Body of pancreas (tissue), 4 donors: ENCODE measurements at regions of chr22 and their contacts with region 1.

Region 1: GRCh38 chr22:50507991-50508884 is at the start of gene NCAPH2:
- DNase-seq: peak; percentile 96 to 98 (median 96)
- ATAC-seq: peak; percentile 88
- H3K4me3 ChIP-seq: peak within 1 kb of the TSS; percentile 90 to 98
- H3K27ac ChIP-seq: peak within 1 kb of the TSS; percentile 90 to 95 (median 92)
- H3K4me1 ChIP-seq: peaks cover 38% of the 10 kb centered on the region
- H3K27me3 ChIP-seq: no peaks in the 10 kb centered on the region
- CTCF ChIP-seq: peak in 2 of 7 experiments; percentile 11 to 31
- POLR2A ChIP-seq: peak; percentile 73 to 87 (median 82)
- total RNA-seq, gene NCAPH2: 30.6 to 35.9 TPM

Region 2: DNA sequence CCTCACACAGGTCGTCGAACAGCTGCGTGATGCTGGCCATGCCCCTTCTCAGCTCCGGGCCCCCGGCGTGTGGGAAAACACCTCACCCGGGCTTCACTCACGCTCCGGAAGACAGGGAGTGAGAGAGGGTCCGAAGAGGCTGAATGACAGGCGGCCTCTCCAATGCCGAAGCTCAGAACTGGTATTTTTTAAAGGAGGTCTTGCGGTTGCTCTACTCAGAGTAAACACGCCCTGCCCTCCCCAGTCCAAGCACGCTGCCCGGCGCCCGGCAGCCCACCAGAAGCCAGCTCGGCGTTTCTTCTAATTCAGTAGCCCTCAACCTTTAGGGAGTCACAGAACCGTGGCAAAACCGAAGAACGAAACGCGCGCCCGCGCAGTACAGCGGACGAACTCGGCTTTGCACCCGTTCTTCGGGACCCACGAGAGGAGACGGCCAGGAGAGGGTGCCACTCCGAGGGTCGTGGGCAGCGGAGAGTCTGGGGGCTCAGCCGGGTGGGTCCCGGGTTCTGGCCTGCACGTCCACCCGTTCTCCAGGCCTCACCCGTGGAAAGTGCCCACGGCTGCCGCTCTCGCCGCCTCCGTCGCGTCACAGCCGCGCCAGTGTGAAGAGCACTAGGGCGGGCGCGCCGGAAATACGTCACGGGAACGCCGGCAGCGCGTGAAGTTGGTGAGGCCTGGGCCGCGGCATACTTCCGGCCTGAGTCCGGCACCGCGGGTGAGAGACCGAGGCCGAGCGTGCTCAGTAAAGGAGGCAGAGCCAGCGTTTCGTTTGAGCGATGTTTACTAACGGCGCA is 263.6 kb before region 1 on chr22 and contains the start of gene TUBGCP6:
- intact Hi-C with region 1: loop called (anchors 10 kb)
- DNase-seq: peak; percentile 93 to 97 (median 95)
- ATAC-seq: peak; percentile 93
- H3K4me3 ChIP-seq: peak within 1 kb of the TSS; percentile 39 to 93
- H3K27ac ChIP-seq: peak within 1 kb of the TSS; percentile 75 to 97 (median 94)
- H3K4me1 ChIP-seq: peaks cover 43% of the 10 kb centered on the region
- H3K27me3 ChIP-seq: no peaks in the 10 kb centered on the region
- CTCF ChIP-seq: peak in 5 of 7 experiments; percentile 33 to 64 (median 44)
- POLR2A ChIP-seq: peak; percentile 77 to 90 (median 87)
- total RNA-seq, gene TUBGCP6: 61.2 to 121 TPM

Region 3: GRCh38 chr22:50469377-50470305 is 38.6 kb before region 1 on chr22:
- intact Hi-C with region 1: loop called (anchors 5 kb)
- DNase-seq: peak; percentile 47 to 80 (median 77)
- ATAC-seq: peak; percentile 6
- H3K4me3 ChIP-seq: no peak overlapping the region
- H3K27ac ChIP-seq: peak overlapping the region in 3 of 4 donors; percentile 9 to 46 (median 16)
- H3K4me1 ChIP-seq: peaks cover 50% of the 10 kb centered on the region
- H3K27me3 ChIP-seq: no peaks in the 10 kb centered on the region
- CTCF ChIP-seq: no peak
- POLR2A ChIP-seq: no peak

Region 4: GRCh38 chr22:50548040-50548912 is 40.0 kb after region 1 on chr22:
- intact Hi-C with region 1: no loop called
- DNase-seq: peak in 3 of 4 donors; percentile 39 to 49 (median 45)
- ATAC-seq: peak; percentile 47
- H3K4me3 ChIP-seq: no peak overlapping the region
- H3K27ac ChIP-seq: no peak overlapping the region
- H3K4me1 ChIP-seq: peaks cover 22% of the 10 kb centered on the region
- H3K27me3 ChIP-seq: peaks cover 0 to 23% of the 10 kb centered on the region in 2 donors
- CTCF ChIP-seq: no peak
- POLR2A ChIP-seq: no peak

Region 5: DNA sequence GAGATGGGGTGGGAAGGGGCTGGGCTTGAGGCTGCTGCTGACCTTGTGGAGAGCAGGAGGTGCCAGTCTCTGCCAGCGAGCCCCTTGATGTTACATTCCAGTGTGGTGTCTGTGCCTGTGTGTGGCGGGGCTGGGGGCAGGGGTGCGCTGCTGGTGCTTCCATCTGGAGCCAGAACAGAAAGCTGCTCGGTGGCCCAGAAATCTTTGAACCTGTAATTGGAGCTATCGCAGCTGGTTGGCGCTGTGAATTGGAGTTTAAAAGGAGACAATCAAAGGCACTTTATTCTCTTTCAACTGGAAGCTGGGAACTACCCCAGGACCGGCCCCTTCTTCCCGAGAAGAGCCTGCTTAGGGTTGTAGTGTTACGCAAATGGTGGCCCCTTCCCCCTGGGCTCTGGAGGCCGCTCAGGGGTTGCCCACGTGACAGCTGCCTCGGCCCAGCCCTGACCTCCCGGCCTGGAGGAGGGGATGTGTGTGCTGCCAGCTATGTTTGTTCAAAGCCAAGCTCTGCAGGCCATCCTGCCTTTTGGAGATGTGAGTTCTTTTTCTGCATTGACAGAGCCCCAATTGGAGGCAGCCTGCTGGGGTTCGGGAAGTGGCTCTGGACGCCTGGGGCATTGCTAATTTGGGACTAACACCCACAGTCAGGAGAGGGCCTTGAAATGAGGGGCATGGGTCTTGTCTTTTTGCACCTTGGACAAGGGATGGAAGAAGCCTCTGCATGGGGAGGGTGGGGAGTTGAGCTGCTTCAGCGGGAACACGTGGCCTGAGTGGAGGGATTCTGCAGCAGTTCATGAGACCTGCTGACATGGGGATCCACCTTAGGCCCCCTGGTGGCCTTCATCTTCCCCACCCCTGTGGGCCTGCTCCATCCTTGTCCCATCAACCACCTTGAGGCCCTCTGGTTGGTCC is 133.7 kb after region 1 on chr22:
- intact Hi-C with region 1: no loop called
- DNase-seq: no peak
- ATAC-seq: peak; percentile 18
- H3K4me3 ChIP-seq: no peak overlapping the region
- H3K27ac ChIP-seq: no peak overlapping the region
- H3K4me1 ChIP-seq: peaks cover 7% of the 10 kb centered on the region
- H3K27me3 ChIP-seq: peaks cover 0 to 10% of the 10 kb centered on the region in 2 donors
- CTCF ChIP-seq: peak in 2 of 7 experiments; percentile 8 to 20
- POLR2A ChIP-seq: no peak